Activated T-helper 1 cell treated with anti-CD3 and anti-CD28 coated beads, Interleukin-12 subunit alpha, Interleukin-12 subunit beta, Interleukin-2, Interleukin-4 antibody, amounts not matched to agents 30 ng/mL and 10 ng/mL and 1 ng/mL, durations not matched to agents 14 hours and 24 hours and 36 hours (primary cell): ENCODE measurements at regions of chr7 and their contacts with region 1.

Region 1: DNA sequence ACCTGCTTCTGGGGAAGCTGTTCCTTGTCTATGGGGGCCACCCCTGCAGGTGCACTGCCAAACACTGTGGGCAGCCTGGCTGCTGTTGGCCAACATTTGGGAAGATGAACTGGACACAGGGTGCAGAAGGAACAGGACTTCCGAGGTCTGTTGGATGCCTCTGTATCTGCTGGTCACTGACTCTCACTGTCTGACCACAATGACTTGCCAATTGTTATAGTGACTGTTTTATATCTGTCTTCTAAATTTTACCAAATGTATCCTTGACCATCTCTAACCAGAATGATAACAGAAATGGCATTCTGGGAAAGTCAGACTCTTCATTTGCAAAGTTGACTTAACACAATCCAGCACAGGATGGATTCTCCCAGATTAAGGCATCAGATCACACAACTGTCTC is 214.0 kb upstream of the PRSS58 start:
- DNase-seq: no peak
- H3K4me3 Mint-ChIP-seq: no peak overlapping the region
- H3K27ac Mint-ChIP-seq: no peak overlapping the region
- H3K4me1 Mint-ChIP-seq: peaks cover 33% of the 10 kb centered on the region
- H3K27me3 Mint-ChIP-seq: no peaks in the 10 kb centered on the region

Region 2: GRCh38 chr7:140557809-140558518 is 1913.9 kb before region 1 on chr7:
- intact Hi-C with region 1: no loop called
- DNase-seq: no peak
- H3K4me3 Mint-ChIP-seq: no peak overlapping the region
- H3K27ac Mint-ChIP-seq: no peak overlapping the region
- H3K4me1 Mint-ChIP-seq: no peaks in the 10 kb centered on the region
- H3K27me3 Mint-ChIP-seq: peaks cover 8% of the 10 kb centered on the region

Region 3: GRCh38 chr7:142434666-142435167 is 37.1 kb before region 1 on chr7:
- intact Hi-C with region 1: no loop called
- DNase-seq: no peak
- H3K4me3 Mint-ChIP-seq: peak overlapping the region; percentile 68
- H3K27ac Mint-ChIP-seq: no peak overlapping the region
- H3K4me1 Mint-ChIP-seq: peaks cover 33% of the 10 kb centered on the region
- H3K27me3 Mint-ChIP-seq: peaks cover 6% of the 10 kb centered on the region

Region 4: DNA sequence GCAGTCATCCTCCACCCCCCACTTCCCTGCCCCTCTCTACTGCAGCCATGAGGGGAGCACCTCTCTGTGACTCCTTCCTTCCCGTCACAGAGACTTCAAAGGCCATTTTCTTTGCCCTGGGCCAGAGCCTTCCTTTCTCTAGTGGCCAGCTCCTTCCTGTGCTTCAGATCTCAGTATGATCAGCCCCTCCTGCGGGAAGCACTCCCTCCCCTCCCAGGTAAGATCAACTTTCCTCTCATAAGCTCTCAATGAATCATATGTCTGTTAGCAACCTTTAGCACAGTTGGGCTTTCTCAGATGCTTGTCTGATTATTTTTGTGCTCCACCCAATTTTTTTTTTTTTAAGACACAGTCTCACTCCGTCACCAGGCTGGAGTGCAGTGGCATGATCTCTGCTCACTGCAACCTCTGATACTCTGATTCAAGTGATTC is 36.5 kb after region 1 on chr7:
- intact Hi-C with region 1: loop called (anchors 1 kb)
- DNase-seq: no peak
- H3K4me3 Mint-ChIP-seq: no peak overlapping the region
- H3K27ac Mint-ChIP-seq: no peak overlapping the region
- H3K4me1 Mint-ChIP-seq: peaks cover 5% of the 10 kb centered on the region
- H3K27me3 Mint-ChIP-seq: peaks cover 4% of the 10 kb centered on the region